ENCODE measurements at regions of chr2 and their contacts with region 1.

Region 1: DNA sequence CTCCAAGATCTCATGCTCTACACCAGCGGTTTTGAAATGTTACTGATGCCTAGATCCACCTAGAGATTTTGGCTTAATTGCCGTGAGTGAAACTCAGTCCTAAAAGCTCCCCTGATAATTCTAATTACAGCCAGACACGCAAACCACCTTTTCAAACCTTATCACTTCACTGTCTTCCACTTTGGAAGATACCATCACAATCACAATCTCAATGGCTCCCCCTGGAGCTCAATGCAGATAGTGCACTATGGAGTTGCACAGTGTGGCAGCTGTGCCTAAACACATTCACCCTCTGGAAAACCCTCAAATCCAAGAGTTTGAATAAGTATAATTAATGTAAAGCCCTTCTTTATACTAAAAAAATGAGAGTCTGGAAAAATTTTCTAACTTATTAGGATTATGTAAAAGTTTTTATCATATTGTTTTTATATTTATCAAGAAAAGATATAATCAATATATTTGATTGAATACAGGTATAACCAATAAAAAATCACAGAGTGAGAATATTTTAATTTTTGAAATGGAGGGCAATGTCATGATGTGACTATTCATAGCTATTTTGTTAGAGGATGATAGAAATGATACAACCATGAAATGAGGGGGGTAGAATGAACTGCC is 102.9 kb upstream of the SLC8A1 start:
- DNase-seq: peak; percentile 65
- ATAC-seq: peak; percentile 78 to 90

Region 2: GRCh38 chr2:40451918-40452605 is 102.7 kb before region 1 on chr2 and contains the start of gene SLC8A1:
- intact Hi-C with region 1: loop called in 1 of 2 experiments (anchors 5 kb)
- DNase-seq: peak; percentile 33
- ATAC-seq: peak; percentile 61 to 68
- total RNA-seq, gene SLC8A1: 590 to 696 TPM

Region 3: GRCh38 chr2:40511661-40512213 is 43.0 kb before region 1 on chr2:
- intact Hi-C with region 1: loop called in 1 of 2 experiments (anchors 5 kb)
- DNase-seq: peak; percentile 28
- ATAC-seq: peak; percentile 43 to 58

Measured in left cardiac atrium (tissue), 4 donors.